B cell (primary cell): ENCODE measurements at regions of chr12 and their contacts with region 1.

Region 1: DNA sequence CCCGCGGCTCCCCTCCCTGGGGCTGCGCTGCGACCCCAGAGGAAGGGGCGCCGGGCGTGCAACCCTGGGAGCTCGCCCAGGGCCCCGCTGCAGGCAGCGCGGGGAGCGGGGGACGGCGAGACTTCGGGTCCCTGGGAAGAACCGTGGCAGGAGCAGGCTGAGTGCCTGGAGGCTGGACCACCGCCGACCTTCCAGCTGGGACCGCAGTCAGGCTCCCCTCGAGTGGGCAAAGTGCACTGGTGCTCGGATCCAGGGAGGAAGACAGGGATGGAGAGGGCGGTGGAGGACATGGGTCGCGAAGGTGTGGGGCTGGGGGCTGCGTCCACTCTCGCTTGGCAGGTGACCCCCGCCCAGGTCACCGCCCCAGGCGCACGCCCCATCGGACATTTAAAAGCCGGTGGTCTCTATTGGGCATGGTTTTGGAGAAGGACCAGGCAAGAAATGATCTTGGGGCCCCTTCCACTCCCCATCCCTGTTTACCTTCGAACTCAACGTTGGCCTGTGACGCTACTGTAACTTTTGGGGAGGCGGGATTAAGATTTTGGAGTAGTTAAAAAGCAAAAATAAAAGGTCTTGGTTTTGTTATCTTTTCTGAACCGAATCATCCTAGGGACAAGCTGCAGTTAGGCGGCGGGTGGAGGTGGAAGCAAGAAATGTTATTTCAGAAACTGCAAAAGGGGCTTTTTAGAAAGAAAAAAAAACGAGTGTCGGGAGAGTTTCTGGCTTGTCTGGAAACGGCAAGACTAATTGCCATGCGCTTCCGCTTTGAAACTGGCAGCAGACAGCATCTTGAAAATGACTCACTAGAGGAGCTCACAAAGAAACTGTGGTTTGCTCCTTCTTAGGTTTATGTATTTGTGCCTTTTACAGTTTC is 1.0 kb downstream of the ELK3 start:
- DNase-seq: peak; percentile 87
- ATAC-seq: peak; percentile 57
- H3K4me3 ChIP-seq: peak overlapping the region; percentile 82 to 95 (median 90)
- H3K4me3 Mint-ChIP-seq: peak overlapping the region; percentile 97
- H3K27ac ChIP-seq: peak overlapping the region; percentile 70 to 97
- H3K27ac Mint-ChIP-seq: peak overlapping the region; percentile 98
- H3K4me1 ChIP-seq: peaks cover 56 to 65% of the 10 kb centered on the region in 2 donors
- H3K4me1 Mint-ChIP-seq: peaks cover 68% of the 10 kb centered on the region
- H3K27me3 ChIP-seq: no peaks in the 10 kb centered on the region
- H3K27me3 Mint-ChIP-seq: no peaks in the 10 kb centered on the region
- CTCF ChIP-seq: no peak

Region 2: DNA sequence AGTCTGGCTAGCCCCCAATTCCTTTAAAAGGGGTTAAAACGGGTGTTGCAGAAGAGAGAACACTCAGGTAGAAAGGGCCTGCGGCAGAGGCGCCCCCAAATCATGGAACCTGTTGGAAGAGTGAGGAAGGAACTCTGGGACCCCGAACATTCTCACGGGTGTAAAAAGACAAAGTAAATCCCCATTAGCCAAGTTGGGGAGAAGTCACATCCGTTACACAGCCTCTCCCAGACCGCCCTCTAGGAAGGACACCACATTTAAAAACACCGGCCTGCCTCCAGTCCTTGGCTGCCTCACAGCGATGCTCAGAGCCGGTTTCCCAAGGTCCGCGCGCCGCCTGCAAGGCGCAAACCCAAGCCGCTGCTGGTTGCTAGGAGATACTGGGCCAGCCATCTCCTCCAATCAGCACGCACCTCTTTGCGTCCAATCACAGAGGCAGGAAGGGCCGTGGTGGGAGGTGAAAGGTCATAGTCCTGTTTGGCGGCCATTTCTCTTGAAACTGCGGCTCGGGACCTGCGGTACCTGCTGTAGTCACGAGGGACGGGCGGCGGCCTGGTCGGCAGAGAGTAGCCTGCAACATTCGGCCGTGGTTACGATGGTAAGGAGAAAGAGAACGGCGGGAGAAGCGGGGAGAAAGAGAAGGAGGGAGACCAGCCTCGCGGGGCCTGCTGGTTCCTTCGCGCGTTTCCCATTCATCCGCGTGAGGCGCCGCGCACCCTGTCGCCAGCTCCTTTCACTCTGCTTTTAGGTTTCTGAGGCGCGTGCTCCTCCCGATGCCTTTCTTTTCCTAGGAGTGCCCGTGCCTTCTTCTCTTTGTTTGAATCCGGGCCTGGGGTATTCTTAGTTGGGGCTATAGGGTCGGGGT is 336.5 kb before region 1 on chr12 and contains the start of gene SNRPF:
- CTCF ChIA-PET with region 1: no interaction called
- POLR2A ChIA-PET with region 1: no interaction called
- intact Hi-C with region 1: loop called (anchors 5 kb)
- DNase-seq: peak; percentile 97
- ATAC-seq: peak; percentile 96
- H3K4me3 ChIP-seq: peak within 1 kb of the TSS; percentile 70 to 89 (median 76)
- H3K4me3 Mint-ChIP-seq: no peak within 1 kb of the TSS
- H3K27ac ChIP-seq: peak within 1 kb of the TSS; percentile 83 to 95
- H3K27ac Mint-ChIP-seq: peak within 1 kb of the TSS; percentile 37
- H3K4me1 ChIP-seq: peaks cover 24 to 28% of the 10 kb centered on the region in 2 donors
- H3K4me1 Mint-ChIP-seq: peaks cover 14% of the 10 kb centered on the region
- H3K27me3 ChIP-seq: peaks cover 0 to 11% (median 9%) of the 10 kb centered on the region in 4 experiments
- H3K27me3 Mint-ChIP-seq: peaks cover 9% of the 10 kb centered on the region
- CTCF ChIP-seq: peak; percentile 18
- total RNA-seq, gene SNRPF: 23.8 and 25.5 TPM in 2 replicates

Region 3: GRCh38 chr12:96007729-96008128 is 187.5 kb before region 1 on chr12:
- CTCF ChIA-PET with region 1: no interaction called
- POLR2A ChIA-PET with region 1: interaction called, 10 read pairs
- intact Hi-C with region 1: no loop called
- DNase-seq: no peak
- ATAC-seq: no peak
- H3K4me3 ChIP-seq: no peak overlapping the region
- H3K4me3 Mint-ChIP-seq: no peak overlapping the region
- H3K27ac ChIP-seq: no peak overlapping the region
- H3K27ac Mint-ChIP-seq: no peak overlapping the region
- H3K4me1 ChIP-seq: no peaks in the 10 kb centered on the region
- H3K4me1 Mint-ChIP-seq: no peaks in the 10 kb centered on the region
- H3K27me3 ChIP-seq: no peaks in the 10 kb centered on the region
- H3K27me3 Mint-ChIP-seq: no peaks in the 10 kb centered on the region
- CTCF ChIP-seq: no peak

Region 4: GRCh38 chr12:96044017-96044942 is 150.9 kb before region 1 on chr12:
- CTCF ChIA-PET with region 1: interaction called, 3 read pairs
- POLR2A ChIA-PET with region 1: interaction called, 15 read pairs
- intact Hi-C with region 1: loop called (anchors 5 kb)
- DNase-seq: peak; percentile 38
- ATAC-seq: peak; percentile 65
- H3K4me3 ChIP-seq: peak overlapping the region in 1 of 5 experiments; percentile 26
- H3K4me3 Mint-ChIP-seq: peak overlapping the region; percentile 74
- H3K27ac ChIP-seq: peak overlapping the region; percentile 61 to 82
- H3K27ac Mint-ChIP-seq: peak overlapping the region; percentile 87
- H3K4me1 ChIP-seq: peaks cover 61 to 64% of the 10 kb centered on the region in 2 donors
- H3K4me1 Mint-ChIP-seq: peaks cover 57% of the 10 kb centered on the region
- H3K27me3 ChIP-seq: no peaks in the 10 kb centered on the region
- H3K27me3 Mint-ChIP-seq: no peaks in the 10 kb centered on the region
- CTCF ChIP-seq: no peak

Region 5: GRCh38 chr12:96078231-96079135 is 116.7 kb before region 1 on chr12:
- CTCF ChIA-PET with region 1: no interaction called
- POLR2A ChIA-PET with region 1: no interaction called
- intact Hi-C with region 1: no loop called
- DNase-seq: no peak
- ATAC-seq: no peak
- H3K4me3 ChIP-seq: no peak overlapping the region
- H3K4me3 Mint-ChIP-seq: no peak overlapping the region
- H3K27ac ChIP-seq: no peak overlapping the region
- H3K27ac Mint-ChIP-seq: no peak overlapping the region
- H3K4me1 ChIP-seq: peaks cover 2 to 4% of the 10 kb centered on the region in 2 donors
- H3K4me1 Mint-ChIP-seq: peaks cover 2% of the 10 kb centered on the region
- H3K27me3 ChIP-seq: no peaks in the 10 kb centered on the region
- H3K27me3 Mint-ChIP-seq: no peaks in the 10 kb centered on the region
- CTCF ChIP-seq: no peak

Region 6: DNA sequence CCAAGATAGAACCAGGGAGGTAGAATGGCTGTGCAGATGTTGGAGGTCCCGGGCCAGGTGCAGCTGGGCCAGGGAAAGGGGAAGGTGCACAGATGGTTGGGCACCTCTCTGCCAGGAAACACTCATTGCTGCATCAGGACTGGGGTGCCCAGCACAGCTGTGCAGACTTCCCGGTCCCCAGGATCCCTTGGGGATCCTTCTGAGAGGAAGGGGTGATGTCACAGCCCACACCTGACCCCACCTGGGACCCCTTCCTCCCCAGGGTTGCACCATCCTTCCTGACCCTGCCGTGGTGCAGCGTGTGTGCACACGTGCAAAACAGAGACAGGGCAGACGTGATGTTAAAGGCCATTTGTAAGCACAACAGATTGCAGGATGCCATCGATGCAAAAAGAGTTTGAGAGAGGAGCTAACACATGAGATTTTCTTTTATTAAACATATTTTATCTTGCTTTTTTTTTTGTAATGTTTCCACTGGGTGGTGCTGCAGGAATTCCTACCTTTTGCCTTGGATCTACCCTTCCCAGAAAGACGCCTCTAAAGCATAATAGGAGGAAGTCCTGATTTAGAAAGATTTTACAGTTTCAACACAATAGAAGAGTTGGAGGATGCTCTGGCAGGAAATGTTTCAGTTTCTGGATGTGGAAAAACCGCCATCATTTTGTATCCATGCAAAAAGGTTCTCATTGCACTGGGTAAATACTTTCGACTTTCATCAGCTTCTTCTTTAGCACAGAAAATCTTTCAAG is 13.8 kb after region 1 on chr12:
- CTCF ChIA-PET with region 1: interaction called, 13 read pairs
- POLR2A ChIA-PET with region 1: interaction called, 44 read pairs
- intact Hi-C with region 1: loop called (anchors 1 kb)
- DNase-seq: peak; percentile 81
- ATAC-seq: peak; percentile 87
- H3K4me3 ChIP-seq: peak overlapping the region in 1 of 5 experiments; percentile 34
- H3K4me3 Mint-ChIP-seq: peak overlapping the region; percentile 81
- H3K27ac ChIP-seq: peak overlapping the region; percentile 46 to 68
- H3K27ac Mint-ChIP-seq: peak overlapping the region; percentile 90
- H3K4me1 ChIP-seq: peaks cover 95 to 98% of the 10 kb centered on the region in 2 donors
- H3K4me1 Mint-ChIP-seq: peaks cover 91% of the 10 kb centered on the region
- H3K27me3 ChIP-seq: no peaks in the 10 kb centered on the region
- H3K27me3 Mint-ChIP-seq: no peaks in the 10 kb centered on the region
- CTCF ChIP-seq: no peak

Region 7: DNA sequence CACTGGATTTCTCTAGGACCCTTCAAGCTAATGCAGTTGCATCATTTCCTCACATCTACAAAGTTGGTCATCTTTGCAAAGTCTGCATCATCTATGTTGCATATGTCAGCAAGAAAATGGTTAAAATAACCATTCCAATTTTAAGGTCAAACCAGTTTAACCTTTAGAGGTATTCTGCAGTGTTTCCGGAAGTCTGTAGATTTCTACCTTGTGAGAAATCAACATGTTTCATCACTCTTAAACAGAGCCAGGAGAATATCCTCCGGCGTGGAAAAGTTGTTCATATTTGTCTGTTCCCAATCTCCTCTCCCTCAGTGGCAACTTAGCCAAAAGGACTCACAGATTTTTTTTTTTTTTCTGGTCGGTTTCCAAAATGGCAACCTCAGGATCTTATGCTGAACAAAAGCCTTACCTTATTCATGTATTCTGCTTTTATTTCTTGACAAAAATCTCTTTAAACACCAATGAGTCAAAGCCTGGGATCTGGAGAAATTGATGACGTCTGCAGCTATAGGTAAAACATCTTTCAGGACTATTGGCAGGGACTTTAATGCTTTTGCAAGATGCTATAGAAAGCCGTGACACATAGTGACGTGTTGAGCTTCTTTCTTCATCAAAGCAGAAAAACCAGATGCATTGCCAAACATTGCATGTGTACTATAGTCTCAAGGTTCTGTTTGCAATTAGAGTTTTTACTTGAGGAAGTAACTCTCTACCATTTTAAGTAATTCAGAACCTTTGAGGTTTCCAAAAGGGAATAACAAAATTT is 221.0 kb after region 1 on chr12:
- CTCF ChIA-PET with region 1: no interaction called
- POLR2A ChIA-PET with region 1: no interaction called
- intact Hi-C with region 1: no loop called
- DNase-seq: no peak
- ATAC-seq: no peak
- H3K4me3 ChIP-seq: no peak overlapping the region
- H3K4me3 Mint-ChIP-seq: no peak overlapping the region
- H3K27ac ChIP-seq: no peak overlapping the region
- H3K27ac Mint-ChIP-seq: no peak overlapping the region
- H3K4me1 ChIP-seq: peaks cover 5 to 12% of the 10 kb centered on the region in 2 donors
- H3K4me1 Mint-ChIP-seq: peaks cover 19% of the 10 kb centered on the region
- H3K27me3 ChIP-seq: no peaks in the 10 kb centered on the region
- H3K27me3 Mint-ChIP-seq: no peaks in the 10 kb centered on the region
- CTCF ChIP-seq: no peak

Region 8: DNA sequence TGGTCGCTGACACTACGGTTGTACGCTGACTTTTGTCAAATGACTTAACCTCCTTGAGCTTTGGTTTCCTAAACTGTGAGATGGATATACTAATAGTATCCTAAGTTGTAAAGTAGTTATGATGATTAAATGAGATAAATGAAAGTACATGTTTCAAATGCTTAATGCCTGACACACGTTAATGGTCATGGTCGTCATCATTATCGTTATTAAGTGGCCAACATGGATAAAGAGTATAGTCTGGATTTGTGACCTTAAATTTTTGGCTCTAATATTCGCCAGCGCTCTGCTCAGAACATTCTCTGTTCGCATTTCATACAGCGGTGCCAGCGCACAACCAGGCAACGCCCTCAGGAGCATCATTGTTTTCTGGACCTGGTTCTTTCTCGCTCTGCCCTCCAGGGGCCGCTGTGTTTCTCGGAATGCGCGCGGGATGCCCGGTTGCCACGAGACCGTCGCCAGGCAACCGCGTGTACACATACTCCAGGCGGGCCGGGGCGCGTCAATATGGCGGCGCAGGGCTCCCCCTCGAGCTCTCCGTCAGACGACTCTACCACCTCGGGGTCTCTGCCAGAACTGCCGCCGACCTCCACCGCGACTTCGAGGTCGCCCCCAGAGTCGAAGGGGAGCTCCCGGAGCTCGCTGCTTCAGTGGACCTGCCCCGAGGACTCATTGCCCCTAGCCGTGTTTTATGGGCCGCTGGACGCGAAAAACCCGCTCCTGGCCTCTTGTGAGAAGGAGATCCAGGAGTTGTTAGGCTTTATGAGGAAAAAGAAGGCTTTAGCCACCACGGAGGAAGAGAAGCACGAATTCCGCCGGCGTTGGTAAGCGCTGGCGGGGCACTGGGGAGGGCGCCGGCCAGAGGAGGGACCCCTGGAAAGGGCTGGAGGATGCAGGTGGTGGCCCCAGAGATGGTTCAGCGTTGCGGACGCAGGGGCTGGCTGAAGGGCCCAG is 294.2 kb after region 1 on chr12 and contains the start of gene CFAP54:
- CTCF ChIA-PET with region 1: no interaction called
- POLR2A ChIA-PET with region 1: no interaction called
- intact Hi-C with region 1: loop called (anchors 5 kb)
- DNase-seq: peak; percentile 96
- ATAC-seq: peak; percentile 91
- H3K4me3 ChIP-seq: peak within 1 kb of the TSS; percentile 35 to 75 (median 67)
- H3K4me3 Mint-ChIP-seq: peak within 1 kb of the TSS; percentile 90
- H3K27ac ChIP-seq: peak within 1 kb of the TSS in 1 of 2 donors; percentile 69
- H3K27ac Mint-ChIP-seq: peak within 1 kb of the TSS; percentile 86
- H3K4me1 ChIP-seq: peaks cover 8 to 10% of the 10 kb centered on the region in 2 donors
- H3K4me1 Mint-ChIP-seq: peaks cover 16% of the 10 kb centered on the region
- H3K27me3 ChIP-seq: peaks cover 0 to 6% (median 3%) of the 10 kb centered on the region in 4 experiments
- H3K27me3 Mint-ChIP-seq: no peaks in the 10 kb centered on the region
- CTCF ChIP-seq: peak; percentile 89
- total RNA-seq, gene CFAP54: 0.24 and 0.76 TPM in 2 replicates